ENCODE measurements at regions of chr3 and their contacts with region 1.

Region 1: DNA sequence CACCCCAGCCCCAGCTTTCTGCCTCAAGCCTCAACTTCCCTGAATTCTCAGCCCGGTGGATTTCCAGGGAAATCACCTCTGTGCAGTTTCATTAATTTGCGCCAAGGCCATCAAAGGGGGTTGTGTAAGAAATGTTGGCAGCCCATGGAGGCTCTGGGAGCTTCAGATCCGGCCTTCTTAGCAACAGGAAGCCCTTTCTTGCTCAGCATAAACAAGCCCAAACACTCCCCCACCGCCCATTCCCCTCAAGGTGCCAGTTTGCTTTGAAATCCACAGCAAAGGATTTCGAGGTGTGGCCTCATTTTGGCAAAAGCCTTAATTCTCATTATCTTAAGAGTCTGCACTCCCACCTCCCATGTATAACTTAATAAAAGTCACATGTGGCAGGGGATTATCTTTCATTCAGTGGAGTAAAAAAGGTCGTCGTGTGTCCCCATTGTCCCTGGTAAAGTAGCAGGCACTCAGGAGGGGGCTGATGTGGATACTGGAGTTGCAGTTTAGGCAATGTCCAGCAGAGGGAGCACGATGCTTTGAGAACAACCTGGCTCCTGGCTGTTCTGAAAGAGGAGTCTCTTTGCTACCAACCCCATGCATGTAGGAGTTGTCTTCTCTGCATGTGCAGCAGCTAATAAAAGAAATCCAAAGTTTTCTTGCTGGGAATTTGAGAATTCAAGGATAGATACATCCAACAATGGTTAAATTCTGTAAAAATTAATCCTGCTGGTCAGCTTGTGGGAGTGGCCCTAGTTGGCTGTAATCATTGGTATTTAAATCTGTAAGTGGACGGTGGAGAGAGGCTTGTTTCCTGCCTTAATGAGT is 39.5 kb downstream of the EBLN2 start:
- DNase-seq: peak; percentile 66 to 94 (median 83)
- H3K4me3 ChIP-seq: peak overlapping the region in 1 of 59 donors; percentile 8
- H3K27ac ChIP-seq: no peak overlapping the region
- H3K27me3 ChIP-seq: no peaks in the 10 kb centered on the region
- CTCF ChIP-seq: peak; percentile 91 to 99 (median 97)

Region 2: GRCh38 chr3:72977060-72977808 is 123.7 kb before region 1 on chr3:
- intact Hi-C with region 1: no loop called
- DNase-seq: no peak
- H3K4me3 ChIP-seq: no peak overlapping the region
- H3K27ac ChIP-seq: peak overlapping the region in 6 of 59 donors; percentile 7 to 50 (median 22)
- H3K27me3 ChIP-seq: no peaks in the 10 kb centered on the region
- CTCF ChIP-seq: peak in 9 of 56 donors; percentile 10 to 29 (median 22)

Region 3: DNA sequence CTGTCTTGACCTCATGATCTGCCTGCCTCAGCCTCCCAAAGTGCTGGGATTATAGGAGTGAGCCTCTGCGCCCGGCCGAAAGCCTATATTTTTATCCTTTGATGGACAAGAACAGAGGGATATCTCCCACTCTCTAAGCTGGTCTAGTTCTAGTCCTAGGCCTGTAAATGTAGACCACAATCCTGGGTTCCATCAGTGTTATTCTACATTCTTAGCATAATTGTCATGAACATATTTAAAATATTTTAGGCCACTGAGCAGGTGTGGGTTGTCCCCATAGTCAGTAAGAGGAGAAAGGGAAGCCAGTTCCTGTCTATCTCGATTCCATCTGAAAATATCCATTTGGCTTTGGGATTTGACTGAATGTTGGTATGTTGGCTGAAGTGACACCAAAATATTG is 78.7 kb after region 1 on chr3:
- intact Hi-C with region 1: no loop called
- DNase-seq: no peak
- H3K4me3 ChIP-seq: no peak overlapping the region
- H3K27ac ChIP-seq: no peak overlapping the region
- H3K27me3 ChIP-seq: no peaks in the 10 kb centered on the region
- CTCF ChIP-seq: no peak

Region 4: GRCh38 chr3:73192035-73192738 is 91.2 kb after region 1 on chr3:
- intact Hi-C with region 1: no loop called
- DNase-seq: no peak
- H3K4me3 ChIP-seq: no peak overlapping the region
- H3K27ac ChIP-seq: no peak overlapping the region
- H3K27me3 ChIP-seq: no peaks in the 10 kb centered on the region
- CTCF ChIP-seq: peak in 4 of 56 donors; percentile 5 to 12 (median 10)

Region 5: GRCh38 chr3:73432023-73432705 is 331.2 kb after region 1 on chr3:
- intact Hi-C with region 1: loop called (anchors 5 kb)
- DNase-seq: peak in 3 of 10 donors; percentile 23 to 58 (median 35)
- H3K4me3 ChIP-seq: peak overlapping the region in 30 of 59 donors; percentile 1 to 42 (median 24)
- H3K27ac ChIP-seq: no peak overlapping the region
- H3K27me3 ChIP-seq: peaks cover 0 to 14% (median 0%) of the 10 kb centered on the region in 45 donors
- CTCF ChIP-seq: peak; percentile 59 to 90 (median 76)

Region 6: GRCh38 chr3:73448761-73449301 is 347.9 kb after region 1 on chr3:
- intact Hi-C with region 1: no loop called
- DNase-seq: no peak
- H3K4me3 ChIP-seq: no peak overlapping the region
- H3K27ac ChIP-seq: peak overlapping the region in 8 of 59 donors; percentile 1 to 47 (median 24)
- H3K27me3 ChIP-seq: no peaks in the 10 kb centered on the region
- CTCF ChIP-seq: no peak

Region 7: GRCh38 chr3:73502609-73503583 is 401.9 kb after region 1 on chr3:
- intact Hi-C with region 1: loop called (anchors 1 kb)
- DNase-seq: peak; percentile 47 to 73 (median 66)
- H3K4me3 ChIP-seq: peak overlapping the region in 4 of 59 donors; percentile 9 to 27 (median 17)
- H3K27ac ChIP-seq: no peak overlapping the region
- H3K27me3 ChIP-seq: no peaks in the 10 kb centered on the region
- CTCF ChIP-seq: peak; percentile 72 to 98 (median 88)